Naive thymus-derived CD4-positive, alpha-beta T cell (primary cell): ENCODE measurements at regions of chr10 and their contacts with region 1.

Region 1: GRCh38 chr10:100998991-100999741 is 442 bp upstream of the LZTS2 start:
- DNase-seq: peak; percentile 69 to 90 (median 82)
- ATAC-seq: peak; percentile 82
- H3K4me3 ChIP-seq: peak overlapping the region; percentile 87
- H3K4me3 Mint-ChIP-seq: peak overlapping the region; percentile 87 to 98 (median 92)
- H3K27ac ChIP-seq: peak overlapping the region; percentile 99
- H3K27ac Mint-ChIP-seq: peak overlapping the region; percentile 88 to 99 (median 94)
- H3K4me1 ChIP-seq: peaks cover 20 to 22% of the 10 kb centered on the region in 2 donors
- H3K4me1 Mint-ChIP-seq: peaks cover 15 to 37% (median 23%) of the 10 kb centered on the region in 7 donors
- H3K27me3 ChIP-seq: no peaks in the 10 kb centered on the region
- H3K27me3 Mint-ChIP-seq: no peaks in the 10 kb centered on the region

Region 2: DNA sequence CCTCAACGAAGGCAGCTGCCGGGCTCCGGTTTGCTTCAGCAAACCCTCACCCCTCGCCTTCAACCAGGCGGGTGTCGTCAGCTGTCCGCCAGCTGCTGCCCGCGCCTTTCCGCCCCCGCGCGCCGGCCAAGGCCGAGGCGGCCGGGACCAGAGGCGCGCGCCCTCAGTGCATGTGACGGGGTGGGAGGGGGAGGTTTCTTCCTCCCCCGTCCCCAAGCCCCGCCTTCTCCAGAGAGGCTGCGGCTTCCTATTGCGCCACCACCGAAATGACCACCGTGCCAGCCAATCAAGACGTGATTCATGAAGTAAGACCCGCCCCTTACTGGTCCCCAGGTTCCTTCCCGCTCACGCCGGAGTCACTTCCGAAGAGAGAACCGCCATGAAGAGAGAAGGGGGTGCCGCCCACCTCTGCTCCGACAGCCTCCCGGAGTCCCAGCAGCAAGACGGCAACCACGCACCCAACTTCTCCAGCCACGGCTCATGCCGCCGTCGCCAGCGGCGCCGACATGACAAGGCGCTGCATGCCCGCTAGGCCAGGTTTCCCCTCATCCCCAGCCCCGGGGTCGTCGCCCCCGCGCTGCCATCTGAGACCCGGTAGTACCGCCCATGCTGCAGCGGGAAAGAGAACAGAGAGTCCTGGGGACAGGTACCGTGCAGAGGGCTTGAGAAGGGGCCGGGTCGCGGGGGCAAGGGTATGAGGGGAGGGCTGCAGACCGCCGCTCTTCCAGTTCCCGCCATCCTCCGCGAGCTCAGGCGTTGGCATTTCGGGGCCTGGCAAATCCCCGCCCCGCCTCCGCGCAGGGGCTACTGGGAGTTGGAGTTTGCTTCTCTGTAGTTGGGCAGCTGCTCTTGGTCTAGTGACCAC is 86.3 kb before region 1 on chr10 and contains the start of gene SLF2:
- CTCF ChIA-PET with region 1: interaction called, 4 read pairs
- POLR2A ChIA-PET with region 1: interaction called, 5 read pairs
- intact Hi-C with region 1: loop called (anchors 1 kb)
- DNase-seq: peak; percentile 69 to 91 (median 88)
- ATAC-seq: peak; percentile 96
- H3K4me3 ChIP-seq: peak within 1 kb of the TSS; percentile 96
- H3K4me3 Mint-ChIP-seq: peak within 1 kb of the TSS; percentile 91 to 100 (median 99)
- H3K27ac ChIP-seq: peak within 1 kb of the TSS; percentile 89
- H3K27ac Mint-ChIP-seq: peak within 1 kb of the TSS; percentile 88 to 99 (median 97)
- H3K4me1 ChIP-seq: peaks cover 12 to 13% of the 10 kb centered on the region in 2 donors
- H3K4me1 Mint-ChIP-seq: peaks cover 22 to 63% (median 60%) of the 10 kb centered on the region in 7 donors
- H3K27me3 ChIP-seq: no peaks in the 10 kb centered on the region
- H3K27me3 Mint-ChIP-seq: no peaks in the 10 kb centered on the region
- total RNA-seq, gene SLF2: 20.1 to 43.7 (median 38.8) TPM

Region 3: DNA sequence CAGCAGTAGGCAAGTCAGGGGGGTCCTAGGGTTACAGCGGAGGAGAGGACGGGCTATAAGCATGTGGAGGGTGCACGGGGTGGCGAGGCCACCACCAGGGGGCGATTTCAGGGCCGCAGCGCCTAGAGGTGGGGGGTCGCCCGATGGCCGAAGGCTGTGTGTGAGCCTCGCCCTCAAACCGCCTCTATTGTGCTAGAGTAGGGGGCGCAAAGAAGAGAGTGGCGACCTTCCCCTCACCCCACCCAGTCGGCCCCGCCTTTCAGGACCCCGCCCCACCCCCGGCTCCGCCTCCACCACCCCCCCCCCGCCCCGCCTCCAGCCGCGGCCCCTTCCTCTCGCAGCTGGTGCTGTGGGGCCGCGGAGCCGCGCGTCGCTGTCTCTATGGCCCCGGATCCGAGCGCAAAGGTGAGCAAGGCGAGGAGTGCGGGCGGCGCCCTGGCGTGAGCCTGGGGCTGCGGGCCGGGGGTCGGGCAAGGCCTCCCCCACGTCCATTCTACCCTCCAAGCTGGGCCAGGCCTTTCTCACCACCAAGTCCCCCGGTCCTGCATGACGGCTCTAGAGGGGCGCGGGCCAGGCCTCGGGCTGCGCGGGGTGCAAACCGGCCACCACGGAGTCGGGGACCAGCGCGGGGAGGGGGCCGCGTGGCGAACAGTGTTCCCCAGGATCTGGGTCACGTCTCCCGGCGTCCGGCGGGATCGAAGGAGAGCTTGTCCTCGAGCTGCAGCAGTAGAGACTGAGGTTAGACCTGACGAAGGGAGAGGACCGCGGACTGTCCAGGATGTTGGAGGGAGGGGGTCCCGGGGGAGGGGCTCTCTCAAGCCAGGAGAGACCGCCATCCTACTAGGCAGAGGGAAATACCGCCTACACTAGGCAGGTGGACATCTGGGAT is 29.7 kb before region 1 on chr10 and contains the start of gene SEMA4G:
- CTCF ChIA-PET with region 1: interaction called, 3 read pairs
- POLR2A ChIA-PET with region 1: interaction called, 17 read pairs
- intact Hi-C with region 1: loop called in 1 of 2 experiments (anchors 1 kb)
- DNase-seq: peak in 8 of 9 donors; percentile 26 to 53 (median 38)
- ATAC-seq: peak; percentile 79
- H3K4me3 ChIP-seq: peak within 1 kb of the TSS; percentile 49
- H3K4me3 Mint-ChIP-seq: peak within 1 kb of the TSS; percentile 53 to 81 (median 73)
- H3K27ac ChIP-seq: peak within 1 kb of the TSS; percentile 30
- H3K27ac Mint-ChIP-seq: peak within 1 kb of the TSS in 3 of 9 donors; percentile 1 to 83 (median 24)
- H3K4me1 ChIP-seq: peaks cover 4 to 12% of the 10 kb centered on the region in 2 donors
- H3K4me1 Mint-ChIP-seq: peaks cover 4 to 18% (median 14%) of the 10 kb centered on the region in 7 donors
- H3K27me3 ChIP-seq: no peaks in the 10 kb centered on the region
- H3K27me3 Mint-ChIP-seq: peaks cover 0 to 5% (median 0%) of the 10 kb centered on the region in 5 donors
- total RNA-seq, gene SEMA4G: 0.78 to 1.7 (median 1.2) TPM

Region 4: GRCh38 chr10:100986952-100987750 is 12.0 kb before region 1 on chr10 and contains the starts of genes MRPL43 and TWNK:
- CTCF ChIA-PET with region 1: interaction called, 24 read pairs
- POLR2A ChIA-PET with region 1: interaction called, 65 read pairs
- intact Hi-C with region 1: loop called (anchors 1 kb)
- DNase-seq: peak; percentile 68 to 88 (median 84)
- ATAC-seq: peak; percentile 94
- H3K4me3 ChIP-seq: peak within 1 kb of the TSS; percentile 89
- H3K4me3 Mint-ChIP-seq: peak within 1 kb of the TSS; percentile 91 to 100 (median 95)
- H3K27ac ChIP-seq: peak within 1 kb of the TSS; percentile 81
- H3K27ac Mint-ChIP-seq: peak within 1 kb of the TSS; percentile 80 to 98 (median 92)
- H3K4me1 ChIP-seq: peaks cover 17 to 24% of the 10 kb centered on the region in 2 donors
- H3K4me1 Mint-ChIP-seq: peaks cover 23 to 60% (median 38%) of the 10 kb centered on the region in 7 donors
- H3K27me3 ChIP-seq: no peaks in the 10 kb centered on the region
- H3K27me3 Mint-ChIP-seq: no peaks in the 10 kb centered on the region
- total RNA-seq, gene MRPL43: 35.8 to 74.5 (median 46.5) TPM
- total RNA-seq, gene TWNK: 5.8 to 17.3 (median 14.8) TPM

Region 5: GRCh38 chr10:101012525-101013364 is 13.6 kb after region 1 on chr10:
- CTCF ChIA-PET with region 1: interaction called, 56 read pairs
- POLR2A ChIA-PET with region 1: interaction called, 9 read pairs
- intact Hi-C with region 1: loop called (anchors 1 kb)
- DNase-seq: peak; percentile 46 to 76 (median 63)
- ATAC-seq: peak; percentile 91
- H3K4me3 ChIP-seq: no peak overlapping the region
- H3K4me3 Mint-ChIP-seq: peak overlapping the region in 1 of 10 donors; percentile 24
- H3K27ac ChIP-seq: no peak overlapping the region
- H3K27ac Mint-ChIP-seq: peak overlapping the region in 3 of 9 donors; percentile 8 to 75 (median 41)
- H3K4me1 ChIP-seq: peaks cover 0 to 5% of the 10 kb centered on the region in 2 donors
- H3K4me1 Mint-ChIP-seq: peaks cover 9 to 21% (median 17%) of the 10 kb centered on the region in 7 donors
- H3K27me3 ChIP-seq: no peaks in the 10 kb centered on the region
- H3K27me3 Mint-ChIP-seq: peaks cover 22 to 39% (median 30%) of the 10 kb centered on the region in 5 donors